HEK293 (cell line): ENCODE measurements at regions of chr17 and their contacts with region 1.

Region 1: GRCh38 chr17:28750178-28751047 is 6.6 kb downstream of the TRAF4 start:
- H3K4me3 ChIP-seq: no peak overlapping the region
- H3K27ac ChIP-seq: 0 out of 2 replicates have a peak overlapping the region, but pooled peaks have one; percentile 12
- H3K4me1 ChIP-seq: peaks cover 8% of the 10 kb centered on the region; the same call in 1 of the 2 replicates
- CTCF ChIP-seq: peak; percentile 96

Region 2: GRCh38 chr17:28615260-28615940 is 135.0 kb before region 1 on chr17:
- CTCF ChIA-PET with region 1: no interaction called
- POLR2A ChIA-PET with region 1: no interaction called
- H3K4me3 ChIP-seq: no peak overlapping the region
- H3K27ac ChIP-seq: no peak overlapping the region
- H3K4me1 ChIP-seq: no peaks in the 10 kb centered on the region
- CTCF ChIP-seq: no peak

Region 3: DNA sequence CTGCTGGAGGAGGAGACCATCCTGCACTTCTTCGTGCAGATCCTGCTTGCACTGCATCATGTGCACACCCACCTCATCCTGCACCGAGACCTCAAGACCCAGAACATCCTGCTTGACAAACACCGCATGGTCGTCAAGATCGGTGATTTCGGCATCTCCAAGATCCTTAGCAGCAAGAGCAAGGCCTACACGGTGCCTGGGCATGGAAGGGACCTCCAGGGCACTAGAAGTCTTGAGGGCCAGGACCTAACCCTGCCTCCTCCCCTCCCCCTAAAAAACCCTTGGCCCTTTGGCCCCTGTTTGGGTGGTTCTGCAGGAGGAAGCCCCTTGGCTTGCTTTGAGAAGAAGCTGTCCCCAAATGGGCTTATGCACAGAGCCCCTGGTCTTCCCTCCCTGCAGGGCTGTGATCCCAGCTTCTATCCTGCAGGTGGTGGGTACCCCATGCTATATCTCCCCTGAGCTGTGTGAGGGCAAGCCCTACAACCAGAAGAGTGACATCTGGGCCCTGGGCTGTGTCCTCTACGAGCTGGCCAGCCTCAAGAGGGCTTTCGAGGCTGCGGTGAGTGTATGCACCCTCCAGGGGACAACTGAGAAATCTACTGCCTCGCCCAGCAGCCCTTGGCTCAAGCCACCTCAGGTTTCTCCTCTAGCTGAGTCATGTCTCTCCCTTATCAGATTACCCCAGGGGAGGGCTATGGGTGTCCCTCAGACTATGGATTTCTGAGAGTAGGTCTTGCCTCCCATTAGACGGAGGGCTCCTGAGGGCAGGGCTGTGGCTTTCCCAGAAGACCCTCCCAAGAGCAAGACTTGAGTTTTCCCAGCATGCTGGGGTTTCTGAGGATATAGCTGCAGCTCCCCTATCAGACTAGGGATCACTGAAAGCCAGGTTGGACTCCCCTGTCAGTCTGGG is 15.3 kb before region 1 on chr17:
- CTCF ChIA-PET with region 1: interaction called, 445 read pairs
- POLR2A ChIA-PET with region 1: interaction called, 5 read pairs
- H3K4me3 ChIP-seq: no peak overlapping the region
- H3K27ac ChIP-seq: no peak overlapping the region
- H3K4me1 ChIP-seq: no peaks in the 10 kb centered on the region
- CTCF ChIP-seq: no peak

Region 4: GRCh38 chr17:28967221-28968140 is 217.1 kb after region 1 on chr17:
- CTCF ChIA-PET with region 1: no interaction called
- POLR2A ChIA-PET with region 1: no interaction called
- H3K4me3 ChIP-seq: no peak overlapping the region
- H3K27ac ChIP-seq: no peak overlapping the region
- H3K4me1 ChIP-seq: no peaks in the 10 kb centered on the region
- CTCF ChIP-seq: no peak